ENCODE measurements at regions of chrX and their contacts with region 1.

Region 1: GRCh38 chrX:20230406-20230805 is 36.3 kb downstream of the RPS6KA3 start:
- H3K4me3 ChIP-seq: no peak overlapping the region
- H3K27ac ChIP-seq: no peak overlapping the region
- H3K4me1 ChIP-seq: no peaks in the 10 kb centered on the region
- CTCF ChIP-seq: no peak

Region 2: GRCh38 chrX:20197641-20198210 is 32.7 kb before region 1 on chrX:
- CTCF ChIA-PET with region 1: no interaction called
- POLR2A ChIA-PET with region 1: no interaction called
- H3K4me3 ChIP-seq: no peak overlapping the region
- H3K27ac ChIP-seq: no peak overlapping the region
- H3K4me1 ChIP-seq: no peaks in the 10 kb centered on the region
- CTCF ChIP-seq: no peak

Region 3: DNA sequence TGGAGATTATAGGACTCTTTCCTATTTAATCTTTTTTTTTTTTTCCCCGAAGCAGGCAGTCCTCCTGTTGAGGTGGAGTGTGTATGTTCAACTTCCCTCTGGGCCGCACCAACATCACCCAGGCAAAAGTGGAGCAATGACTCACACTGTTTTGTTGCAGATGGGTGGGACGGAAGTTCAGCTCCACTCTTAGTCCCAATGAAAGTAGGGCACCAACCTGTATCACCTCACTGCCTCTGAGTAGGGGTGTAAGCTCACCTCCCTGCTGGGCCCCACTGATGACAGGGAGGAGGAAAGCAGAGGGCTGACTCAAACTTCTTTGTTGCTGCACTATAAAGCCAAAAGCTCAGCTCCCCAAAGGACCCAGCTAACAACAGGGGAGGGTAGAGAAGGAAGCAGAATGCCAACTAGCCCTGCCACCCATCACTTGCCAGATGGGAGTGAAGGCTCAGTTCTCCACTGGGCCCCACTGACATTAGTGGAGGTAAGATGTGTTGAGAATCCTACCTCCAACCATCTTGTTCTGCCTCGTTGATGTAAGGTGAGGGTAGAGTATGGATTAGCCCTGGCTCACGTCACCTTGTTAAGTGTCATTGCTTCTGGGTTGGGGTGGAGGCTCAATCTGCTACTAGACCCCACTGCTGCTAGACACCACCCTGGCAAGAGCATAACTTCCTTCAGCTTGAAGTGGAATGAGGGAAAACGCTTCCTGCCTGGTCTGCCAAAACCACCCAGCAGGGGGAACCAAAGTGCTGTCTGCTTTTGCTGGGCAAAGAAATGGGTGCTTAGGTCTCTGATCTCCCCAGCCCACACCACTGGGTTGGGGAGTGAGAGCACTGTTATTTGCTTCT is 22.2 kb after region 1 on chrX:
- CTCF ChIA-PET with region 1: interaction called, 11 read pairs
- POLR2A ChIA-PET with region 1: no interaction called
- H3K4me3 ChIP-seq: no peak overlapping the region
- H3K27ac ChIP-seq: no peak overlapping the region
- H3K4me1 ChIP-seq: no peaks in the 10 kb centered on the region
- CTCF ChIP-seq: no peak